ENCODE measurements at regions of chr12 and their contacts with region 1.

Region 1: GRCh38 chr12:57865090-57865751 is 18.7 kb upstream of the CTDSP2 start:
- DNase-seq: no peak
- H3K4me3 ChIP-seq: peak overlapping the region; percentile 55
- H3K27ac ChIP-seq: peak overlapping the region; percentile 90
- H3K27me3 ChIP-seq: no peaks in the 10 kb centered on the region
- CTCF ChIP-seq: no peak

Region 2: GRCh38 chr12:57852620-57853500 is 12.4 kb before region 1 on chr12:
- CTCF ChIA-PET with region 1: interaction called, 3 read pairs
- POLR2A ChIA-PET with region 1: interaction called, 78 read pairs
- DNase-seq: no peak
- H3K4me3 ChIP-seq: no peak overlapping the region
- H3K27ac ChIP-seq: no peak overlapping the region
- H3K27me3 ChIP-seq: no peaks in the 10 kb centered on the region
- CTCF ChIP-seq: 0 out of 2 replicates have a peak, but pooled peaks have one; percentile 5

Region 3: DNA sequence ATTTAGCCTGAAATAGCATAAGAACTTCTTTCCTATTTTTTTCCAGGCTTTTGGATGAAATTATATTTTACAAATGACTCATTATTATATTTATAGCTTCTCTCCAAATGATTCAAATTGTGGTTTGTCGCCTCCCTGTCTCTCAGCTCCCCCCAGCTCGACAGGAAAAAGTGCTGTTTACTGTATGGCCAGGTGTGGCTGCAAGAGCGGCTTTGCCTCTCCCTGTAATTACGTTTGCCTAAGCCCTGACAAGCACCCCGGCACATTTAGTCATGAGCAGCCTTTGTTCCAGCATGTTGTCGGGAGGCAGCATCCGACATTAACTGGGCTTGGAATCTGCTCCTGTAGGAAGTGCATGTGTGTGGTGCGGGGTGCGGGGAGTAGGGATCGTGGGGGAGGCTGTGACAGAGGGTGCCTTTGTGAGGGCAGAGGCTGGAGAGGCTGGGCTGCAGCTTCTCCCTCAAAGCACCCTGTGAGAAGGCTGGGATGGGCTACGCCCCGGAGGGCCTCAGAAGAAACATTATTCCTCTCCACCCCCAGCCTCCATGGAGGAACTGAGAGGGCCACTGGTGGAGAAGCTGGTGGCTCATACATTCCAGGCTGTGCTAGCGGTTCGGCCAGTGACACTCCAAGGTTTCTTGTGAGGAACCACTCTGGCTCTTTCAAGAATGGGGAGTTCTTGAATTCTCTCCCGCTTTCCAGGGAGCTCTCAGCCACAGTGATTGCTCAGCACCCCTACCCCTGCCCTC is 23.4 kb after region 1 on chr12:
- CTCF ChIA-PET with region 1: interaction called, 7 read pairs
- POLR2A ChIA-PET with region 1: interaction called, 63 read pairs
- DNase-seq: no peak
- H3K4me3 ChIP-seq: peak overlapping the region; percentile 33
- H3K27ac ChIP-seq: peak overlapping the region; percentile 89
- H3K27me3 ChIP-seq: no peaks in the 10 kb centered on the region
- CTCF ChIP-seq: no peak